ENCODE measurements at regions of chr6 and their contacts with region 1.

Region 1: GRCh38 chr6:147268254-147268653 is 64.0 kb downstream of the STXBP5 start:
- DNase-seq: no peak
- H3K4me3 ChIP-seq: no peak overlapping the region
- H3K27ac ChIP-seq: no peak overlapping the region
- H3K4me1 ChIP-seq: no peaks in the 10 kb centered on the region
- H3K27me3 ChIP-seq: no peaks in the 10 kb centered on the region
- CTCF ChIP-seq: no peak

Region 2: DNA sequence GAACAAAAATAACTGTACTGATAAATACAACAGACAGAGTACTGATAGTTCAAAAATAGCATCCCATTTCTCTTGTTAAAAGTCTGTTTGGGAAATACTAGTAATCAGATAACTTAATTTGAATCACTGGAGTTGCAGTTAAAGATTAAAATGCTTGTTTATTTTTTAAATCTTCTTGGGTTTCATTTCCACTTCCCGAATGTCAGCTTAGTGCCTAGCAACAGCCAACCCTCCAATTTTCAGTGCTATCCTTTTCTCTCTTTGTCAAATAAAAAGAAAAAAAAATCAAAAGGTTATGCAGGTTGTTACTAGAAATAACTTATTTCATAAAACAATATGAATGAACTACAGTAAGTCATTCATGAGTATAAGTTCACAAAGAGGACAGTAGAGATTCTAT is 321.7 kb before region 1 on chr6:
- CTCF ChIA-PET with region 1: no interaction called
- POLR2A ChIA-PET with region 1: interaction called, 17 read pairs
- intact Hi-C with region 1: no loop called
- DNase-seq: no peak
- H3K4me3 ChIP-seq: no peak overlapping the region
- H3K27ac ChIP-seq: no peak overlapping the region
- H3K4me1 ChIP-seq: no peaks in the 10 kb centered on the region
- H3K27me3 ChIP-seq: no peaks in the 10 kb centered on the region
- CTCF ChIP-seq: no peak